H1 (cell line): ENCODE measurements at regions of chr7 and their contacts with region 1.

Region 1: DNA sequence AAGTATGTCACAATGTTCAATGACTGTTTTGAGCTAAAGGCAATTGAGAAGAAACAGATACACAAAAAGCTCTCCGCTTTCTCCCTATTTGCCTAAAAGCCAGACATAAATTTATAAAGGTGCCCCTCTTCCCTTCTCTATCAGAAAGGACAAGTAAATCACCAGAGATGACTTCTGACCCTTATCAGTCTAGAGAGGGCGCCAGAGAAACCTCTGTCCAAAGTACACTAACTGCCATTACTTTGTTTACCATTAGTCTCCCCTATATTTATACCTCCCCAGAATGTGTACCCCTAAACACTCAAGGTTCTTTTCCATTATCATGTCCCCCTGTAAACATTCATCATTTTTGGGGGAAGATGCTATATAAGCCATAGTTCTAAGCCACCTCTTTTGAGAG is 49.3 kb downstream of the TPK1 start:
- DNase-seq: no peak
- H3K4me3 ChIP-seq: no peak overlapping the region
- H3K27ac ChIP-seq: no peak overlapping the region
- H3K4me1 ChIP-seq: peaks cover 0 to 3% (median 0%) of the 10 kb centered on the region in 4 experiments; a peak in 1 of 7 replicates
- H3K27me3 ChIP-seq: no peaks in the 10 kb centered on the region
- CTCF ChIP-seq: peak in 2 of 3 experiments; percentile 28 to 42; a peak in 2 of 4 replicates
- EP300 ChIP-seq: no peak
- POLR2A ChIP-seq: no peak
- RAD21 ChIP-seq: peak in 1 of 2 experiments; percentile 17; a peak in 2 of 4 replicates

Region 2: GRCh38 chr7:144454256-144455039 is 332.1 kb before region 1 on chr7:
- CTCF ChIA-PET with region 1: interaction called, 12 read pairs
- POLR2A ChIA-PET with region 1: no interaction called
- DNase-seq: no peak
- H3K4me3 ChIP-seq: no peak overlapping the region
- H3K27ac ChIP-seq: no peak overlapping the region
- H3K4me1 ChIP-seq: no peaks in the 10 kb centered on the region
- H3K27me3 ChIP-seq: no peaks in the 10 kb centered on the region
- CTCF ChIP-seq: peak in 1 of 3 experiments; percentile 37; a peak in 1 of 4 replicates
- EP300 ChIP-seq: no peak
- POLR2A ChIP-seq: no peak
- RAD21 ChIP-seq: peak; percentile 50 to 55; a peak in 3 of 4 replicates

Region 3: DNA sequence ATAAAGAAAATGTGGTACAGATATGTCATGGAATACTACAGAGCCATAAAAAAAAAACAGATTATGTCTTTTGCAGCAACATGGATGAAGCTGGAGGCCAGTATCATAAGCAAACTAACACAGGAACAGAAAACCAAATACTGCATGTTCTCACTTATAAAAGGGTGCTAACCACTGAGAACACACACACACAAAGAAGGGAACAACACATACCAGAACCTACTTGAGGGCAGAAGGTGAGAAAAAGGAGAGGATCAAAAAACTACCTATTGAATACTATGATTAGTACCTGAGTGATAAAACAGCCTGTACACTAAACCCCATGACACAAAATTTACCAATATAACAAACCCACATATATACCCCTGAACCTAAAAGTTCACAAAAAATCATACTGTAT is 95.3 kb before region 1 on chr7:
- CTCF ChIA-PET with region 1: no interaction called
- POLR2A ChIA-PET with region 1: no interaction called
- DNase-seq: no peak
- H3K4me3 ChIP-seq: no peak overlapping the region
- H3K27ac ChIP-seq: no peak overlapping the region
- H3K4me1 ChIP-seq: no peaks in the 10 kb centered on the region
- H3K27me3 ChIP-seq: no peaks in the 10 kb centered on the region
- CTCF ChIP-seq: no peak
- EP300 ChIP-seq: no peak
- POLR2A ChIP-seq: no peak
- RAD21 ChIP-seq: no peak

Region 4: GRCh38 chr7:144738708-144739314 is 47.7 kb before region 1 on chr7:
- CTCF ChIA-PET with region 1: interaction called, 30 read pairs
- POLR2A ChIA-PET with region 1: no interaction called
- DNase-seq: no peak
- H3K4me3 ChIP-seq: no peak overlapping the region
- H3K27ac ChIP-seq: no peak overlapping the region
- H3K4me1 ChIP-seq: no peaks in the 10 kb centered on the region
- H3K27me3 ChIP-seq: no peaks in the 10 kb centered on the region
- CTCF ChIP-seq: peak in 2 of 3 experiments; percentile 36 to 63; a peak in 2 of 4 replicates
- EP300 ChIP-seq: no peak
- POLR2A ChIP-seq: no peak
- RAD21 ChIP-seq: peak; percentile 60 to 64

Region 5: GRCh38 chr7:144796919-144797318 is 10.4 kb after region 1 on chr7:
- CTCF ChIA-PET with region 1: interaction called, 15 read pairs
- POLR2A ChIA-PET with region 1: no interaction called
- DNase-seq: no peak
- H3K4me3 ChIP-seq: no peak overlapping the region
- H3K27ac ChIP-seq: no peak overlapping the region
- H3K4me1 ChIP-seq: no peaks in the 10 kb centered on the region
- H3K27me3 ChIP-seq: no peaks in the 10 kb centered on the region
- CTCF ChIP-seq: no peak
- EP300 ChIP-seq: no peak
- POLR2A ChIP-seq: no peak
- RAD21 ChIP-seq: no peak

Region 6: DNA sequence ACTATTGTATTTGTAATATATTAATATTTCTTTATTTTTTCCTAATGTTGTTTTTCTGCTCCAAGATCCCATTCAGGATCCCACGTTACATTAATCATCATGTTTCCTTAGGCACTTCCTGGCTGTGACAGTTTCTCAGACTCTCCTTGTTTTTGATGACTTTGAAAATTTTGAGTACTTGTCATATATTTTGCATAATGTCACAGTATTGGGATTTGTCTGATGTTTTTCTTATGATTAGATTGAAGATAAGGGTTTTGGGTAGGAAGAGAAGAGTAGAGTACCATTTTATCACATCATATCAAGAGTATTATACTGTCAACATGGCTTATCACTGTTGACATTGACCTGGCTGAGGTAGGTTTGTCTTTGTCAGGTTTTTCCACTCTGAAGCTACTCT is 195.6 kb after region 1 on chr7:
- CTCF ChIA-PET with region 1: no interaction called
- POLR2A ChIA-PET with region 1: no interaction called
- DNase-seq: no peak
- H3K4me3 ChIP-seq: no peak overlapping the region
- H3K27ac ChIP-seq: no peak overlapping the region
- H3K4me1 ChIP-seq: no peaks in the 10 kb centered on the region
- H3K27me3 ChIP-seq: no peaks in the 10 kb centered on the region
- CTCF ChIP-seq: no peak
- EP300 ChIP-seq: no peak
- POLR2A ChIP-seq: no peak
- RAD21 ChIP-seq: no peak